ENCODE measurements at regions of chr18 and their contacts with region 1.

Region 1: DNA sequence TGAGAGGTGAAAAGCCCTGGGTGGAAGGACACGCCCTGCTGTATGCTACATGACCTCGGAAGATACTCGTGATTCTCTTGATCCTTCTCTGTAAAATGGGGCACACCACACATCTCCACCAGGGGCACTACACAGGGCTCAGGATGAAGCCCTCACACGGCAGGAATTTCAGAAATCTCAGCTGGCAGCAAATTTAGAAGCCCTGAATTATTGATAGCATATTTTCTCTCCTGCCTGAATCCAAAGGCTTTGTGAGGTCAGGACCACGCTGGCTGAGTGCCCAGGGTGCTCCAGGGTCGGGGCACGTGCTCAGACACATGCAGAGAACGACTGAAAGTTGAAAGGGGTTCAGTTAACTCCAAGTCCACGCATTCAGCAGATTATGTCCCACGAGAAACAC is 42.1 kb upstream of the GALR1 start:
- DNase-seq: peak; percentile 65
- ATAC-seq: peak; percentile 65
- H3K4me3 ChIP-seq: no peak overlapping the region
- H3K4me3 Mint-ChIP-seq: peak overlapping the region; percentile 70
- H3K27ac ChIP-seq: no peak overlapping the region
- H3K27ac Mint-ChIP-seq: peak overlapping the region; percentile 65
- H3K4me1 ChIP-seq: peaks cover 4 to 28% of the 10 kb centered on the region in 2 donors
- H3K4me1 Mint-ChIP-seq: peaks cover 30% of the 10 kb centered on the region
- H3K27me3 ChIP-seq: peaks cover 0 to 7% (median 0%) of the 10 kb centered on the region in 4 experiments
- H3K27me3 Mint-ChIP-seq: peaks cover 4% of the 10 kb centered on the region
- CTCF ChIP-seq: peak; percentile 70

Region 2: GRCh38 chr18:76364282-76365259 is 843.0 kb before region 1 on chr18:
- CTCF ChIA-PET with region 1: no interaction called
- POLR2A ChIA-PET with region 1: no interaction called
- intact Hi-C with region 1: no loop called
- DNase-seq: no peak
- ATAC-seq: no peak
- H3K4me3 ChIP-seq: no peak overlapping the region
- H3K4me3 Mint-ChIP-seq: peak overlapping the region; percentile 58
- H3K27ac ChIP-seq: no peak overlapping the region
- H3K27ac Mint-ChIP-seq: no peak overlapping the region
- H3K4me1 ChIP-seq: no peaks in the 10 kb centered on the region
- H3K4me1 Mint-ChIP-seq: peaks cover 7% of the 10 kb centered on the region
- H3K27me3 ChIP-seq: no peaks in the 10 kb centered on the region
- H3K27me3 Mint-ChIP-seq: no peaks in the 10 kb centered on the region
- CTCF ChIP-seq: no peak

Region 3: GRCh38 chr18:76875390-76876325 is 331.9 kb before region 1 on chr18:
- CTCF ChIA-PET with region 1: interaction called, 11 read pairs
- POLR2A ChIA-PET with region 1: no interaction called
- intact Hi-C with region 1: no loop called
- DNase-seq: peak; percentile 61
- ATAC-seq: peak; percentile 53
- H3K4me3 ChIP-seq: no peak overlapping the region
- H3K4me3 Mint-ChIP-seq: no peak overlapping the region
- H3K27ac ChIP-seq: no peak overlapping the region
- H3K27ac Mint-ChIP-seq: no peak overlapping the region
- H3K4me1 ChIP-seq: no peaks in the 10 kb centered on the region
- H3K4me1 Mint-ChIP-seq: no peaks in the 10 kb centered on the region
- H3K27me3 ChIP-seq: no peaks in the 10 kb centered on the region
- H3K27me3 Mint-ChIP-seq: no peaks in the 10 kb centered on the region
- CTCF ChIP-seq: peak; percentile 76

Region 4: GRCh38 chr18:76937597-76937996 is 269.9 kb before region 1 on chr18:
- CTCF ChIA-PET with region 1: interaction called, 11 read pairs
- POLR2A ChIA-PET with region 1: no interaction called
- intact Hi-C with region 1: no loop called
- DNase-seq: no peak
- ATAC-seq: no peak
- H3K4me3 ChIP-seq: no peak overlapping the region
- H3K4me3 Mint-ChIP-seq: no peak overlapping the region
- H3K27ac ChIP-seq: no peak overlapping the region
- H3K27ac Mint-ChIP-seq: no peak overlapping the region
- H3K4me1 ChIP-seq: no peaks in the 10 kb centered on the region
- H3K4me1 Mint-ChIP-seq: peaks cover 4% of the 10 kb centered on the region
- H3K27me3 ChIP-seq: no peaks in the 10 kb centered on the region
- H3K27me3 Mint-ChIP-seq: no peaks in the 10 kb centered on the region
- CTCF ChIP-seq: no peak

Region 5: GRCh38 chr18:77124452-77124922 is 83.1 kb before region 1 on chr18:
- CTCF ChIA-PET with region 1: interaction called, 17 read pairs
- POLR2A ChIA-PET with region 1: no interaction called
- intact Hi-C with region 1: no loop called
- DNase-seq: peak; percentile 51
- ATAC-seq: peak; percentile 38
- H3K4me3 ChIP-seq: peak overlapping the region in 3 of 5 experiments; percentile 5 to 45 (median 14)
- H3K4me3 Mint-ChIP-seq: peak overlapping the region; percentile 72
- H3K27ac ChIP-seq: peak overlapping the region; percentile 60 to 80
- H3K27ac Mint-ChIP-seq: peak overlapping the region; percentile 62
- H3K4me1 ChIP-seq: peaks cover 64 to 66% of the 10 kb centered on the region in 2 donors
- H3K4me1 Mint-ChIP-seq: peaks cover 91% of the 10 kb centered on the region
- H3K27me3 ChIP-seq: no peaks in the 10 kb centered on the region
- H3K27me3 Mint-ChIP-seq: no peaks in the 10 kb centered on the region
- CTCF ChIP-seq: no peak

Region 6: GRCh38 chr18:77833807-77834206 is 626.3 kb after region 1 on chr18:
- CTCF ChIA-PET with region 1: no interaction called
- POLR2A ChIA-PET with region 1: no interaction called
- intact Hi-C with region 1: no loop called
- DNase-seq: no peak
- ATAC-seq: no peak
- H3K4me3 ChIP-seq: no peak overlapping the region
- H3K4me3 Mint-ChIP-seq: no peak overlapping the region
- H3K27ac ChIP-seq: no peak overlapping the region
- H3K27ac Mint-ChIP-seq: no peak overlapping the region
- H3K4me1 ChIP-seq: no peaks in the 10 kb centered on the region
- H3K4me1 Mint-ChIP-seq: no peaks in the 10 kb centered on the region
- H3K27me3 ChIP-seq: no peaks in the 10 kb centered on the region
- H3K27me3 Mint-ChIP-seq: no peaks in the 10 kb centered on the region
- CTCF ChIP-seq: no peak

Measured in B cell (primary cell).